ENCODE measurements at regions of chr14 and their contacts with region 1.

Region 1: DNA sequence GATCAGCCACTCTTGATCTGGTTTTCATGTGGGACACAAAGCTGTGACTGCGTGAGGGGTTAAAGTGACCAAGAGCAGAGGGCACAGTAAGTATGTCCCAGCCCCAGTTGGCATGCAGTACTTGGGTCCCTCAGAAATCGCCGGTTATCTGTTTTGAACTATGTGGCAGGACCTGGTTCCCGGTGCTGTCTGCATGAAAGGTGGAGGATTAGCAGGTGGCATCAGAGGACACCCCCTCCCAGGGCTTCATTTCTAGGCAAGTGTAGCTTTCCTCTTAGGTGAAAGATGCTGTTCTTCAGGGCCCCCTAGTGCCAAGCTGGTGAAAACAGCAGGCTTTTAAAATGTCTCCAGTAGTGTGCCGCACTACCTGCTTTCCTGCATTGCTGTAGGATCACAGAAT is 57.1 kb downstream of the ATG14 start:
- DNase-seq: peak; percentile 25 to 79 (median 73)
- ATAC-seq: peak; percentile 95
- H3K4me3 ChIP-seq: peak overlapping the region; percentile 12
- H3K4me3 Mint-ChIP-seq: peak overlapping the region in 9 of 10 donors; percentile 48 to 85 (median 72)
- H3K27ac ChIP-seq: peak overlapping the region; percentile 66
- H3K27ac Mint-ChIP-seq: peak overlapping the region; percentile 72 to 96 (median 95)
- H3K4me1 ChIP-seq: peaks cover 0 to 9% of the 10 kb centered on the region in 2 donors
- H3K4me1 Mint-ChIP-seq: peaks cover 6 to 29% (median 21%) of the 10 kb centered on the region in 7 donors
- H3K27me3 ChIP-seq: no peaks in the 10 kb centered on the region
- H3K27me3 Mint-ChIP-seq: no peaks in the 10 kb centered on the region

Region 2: GRCh38 chr14:55191203-55192053 is 163.1 kb before region 1 on chr14 and contains the start of gene DLGAP5:
- CTCF ChIA-PET with region 1: interaction called, 3 read pairs
- POLR2A ChIA-PET with region 1: no interaction called
- intact Hi-C with region 1: loop called in 1 of 2 experiments (anchors 1 kb)
- DNase-seq: peak; percentile 59 to 90 (median 86)
- ATAC-seq: peak; percentile 98
- H3K4me3 ChIP-seq: peak within 1 kb of the TSS; percentile 84
- H3K4me3 Mint-ChIP-seq: peak within 1 kb of the TSS; percentile 88 to 97 (median 90)
- H3K27ac ChIP-seq: peak within 1 kb of the TSS; percentile 58
- H3K27ac Mint-ChIP-seq: peak within 1 kb of the TSS; percentile 46 to 92 (median 68)
- H3K4me1 ChIP-seq: peaks cover 7 to 10% of the 10 kb centered on the region in 2 donors
- H3K4me1 Mint-ChIP-seq: peaks cover 5 to 42% (median 18%) of the 10 kb centered on the region in 7 donors
- H3K27me3 ChIP-seq: no peaks in the 10 kb centered on the region
- H3K27me3 Mint-ChIP-seq: peaks cover 0 to 4% (median 0%) of the 10 kb centered on the region in 5 donors
- total RNA-seq, gene DLGAP5: 0.49 to 46.7 TPM in 2 of 5 experiments, not detected in the others

Region 3: GRCh38 chr14:55245657-55246268 is 108.7 kb before region 1 on chr14:
- CTCF ChIA-PET with region 1: interaction called, 25 read pairs
- POLR2A ChIA-PET with region 1: no interaction called
- intact Hi-C with region 1: loop called (anchors 1 kb)
- DNase-seq: peak in 7 of 9 donors; percentile 15 to 52 (median 34)
- ATAC-seq: peak; percentile 75
- H3K4me3 ChIP-seq: no peak overlapping the region
- H3K4me3 Mint-ChIP-seq: no peak overlapping the region
- H3K27ac ChIP-seq: no peak overlapping the region
- H3K27ac Mint-ChIP-seq: no peak overlapping the region
- H3K4me1 ChIP-seq: no peaks in the 10 kb centered on the region
- H3K4me1 Mint-ChIP-seq: no peaks in the 10 kb centered on the region
- H3K27me3 ChIP-seq: no peaks in the 10 kb centered on the region
- H3K27me3 Mint-ChIP-seq: peaks cover 8 to 45% (median 12%) of the 10 kb centered on the region in 5 donors

Region 4: DNA sequence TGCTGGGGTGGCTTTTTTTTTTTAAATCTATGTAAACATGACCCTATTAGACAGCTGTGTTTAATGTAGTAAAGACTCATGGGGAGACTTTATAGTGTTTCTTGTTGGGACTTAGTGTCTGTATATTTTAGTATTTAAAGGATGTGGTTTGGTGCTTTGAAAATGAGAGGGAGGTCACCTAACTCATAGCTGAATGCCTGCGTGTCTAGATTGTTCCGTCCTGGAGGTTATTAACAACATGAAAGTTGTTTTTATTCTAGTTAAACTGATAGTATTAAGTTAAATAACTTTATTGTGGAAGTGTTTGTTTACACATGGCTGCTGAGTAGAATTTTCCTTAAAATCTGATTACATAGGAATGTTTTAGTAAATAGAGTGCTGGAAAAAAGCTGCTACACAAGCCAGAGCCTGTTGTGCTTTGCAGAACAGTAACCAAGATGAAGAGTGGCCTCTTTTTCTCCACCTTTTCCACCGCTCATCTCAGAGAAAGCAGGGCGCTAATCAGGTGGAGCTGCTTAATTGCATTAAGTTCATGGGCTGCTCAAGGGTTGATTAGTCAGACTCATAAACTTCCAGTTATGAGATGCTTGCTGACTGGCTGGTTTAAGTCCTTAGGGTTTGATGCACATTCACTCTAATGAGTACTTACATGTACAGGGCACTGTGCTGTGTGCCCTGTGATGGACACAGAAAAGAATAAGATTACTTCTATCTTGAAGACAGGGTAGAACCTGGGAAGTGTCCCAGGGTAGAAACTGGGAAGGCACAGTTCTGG is 20.6 kb before region 1 on chr14:
- CTCF ChIA-PET with region 1: interaction called, 27 read pairs
- POLR2A ChIA-PET with region 1: interaction called, 8 read pairs
- intact Hi-C with region 1: loop called (anchors 1 kb)
- DNase-seq: no peak
- ATAC-seq: peak; percentile 13
- H3K4me3 ChIP-seq: peak overlapping the region; percentile 19
- H3K4me3 Mint-ChIP-seq: peak overlapping the region; percentile 10 to 89 (median 84)
- H3K27ac ChIP-seq: peak overlapping the region; percentile 69
- H3K27ac Mint-ChIP-seq: peak overlapping the region; percentile 77 to 92 (median 85)
- H3K4me1 ChIP-seq: peaks cover 46 to 55% of the 10 kb centered on the region in 2 donors
- H3K4me1 Mint-ChIP-seq: peaks cover 49 to 94% (median 81%) of the 10 kb centered on the region in 7 donors
- H3K27me3 ChIP-seq: no peaks in the 10 kb centered on the region
- H3K27me3 Mint-ChIP-seq: no peaks in the 10 kb centered on the region

Region 5: GRCh38 chr14:55454264-55455002 is 99.9 kb after region 1 on chr14:
- CTCF ChIA-PET with region 1: no interaction called
- POLR2A ChIA-PET with region 1: no interaction called
- intact Hi-C with region 1: no loop called
- DNase-seq: no peak
- ATAC-seq: peak; percentile 36
- H3K4me3 ChIP-seq: no peak overlapping the region
- H3K4me3 Mint-ChIP-seq: no peak overlapping the region
- H3K27ac ChIP-seq: no peak overlapping the region
- H3K27ac Mint-ChIP-seq: no peak overlapping the region
- H3K4me1 ChIP-seq: no peaks in the 10 kb centered on the region
- H3K4me1 Mint-ChIP-seq: peaks cover 0 to 6% (median 0%) of the 10 kb centered on the region in 7 donors
- H3K27me3 ChIP-seq: no peaks in the 10 kb centered on the region
- H3K27me3 Mint-ChIP-seq: peaks cover 0 to 7% (median 5%) of the 10 kb centered on the region in 5 donors